ENCODE measurements at regions of chr9 and their contacts with region 1.

Region 1: GRCh38 chr9:114551883-114552685 is 35.5 kb upstream of the ATP6V1G1 start:
- DNase-seq: peak; percentile 98
- ATAC-seq: peak; percentile 96
- H3K4me3 ChIP-seq: peak overlapping the region; percentile 45
- H3K27ac ChIP-seq: peak overlapping the region; percentile 99
- H3K4me1 ChIP-seq: peaks cover 22% of the 10 kb centered on the region
- H3K27me3 ChIP-seq: no peaks in the 10 kb centered on the region
- CTCF ChIP-seq: no peak

Region 2: DNA sequence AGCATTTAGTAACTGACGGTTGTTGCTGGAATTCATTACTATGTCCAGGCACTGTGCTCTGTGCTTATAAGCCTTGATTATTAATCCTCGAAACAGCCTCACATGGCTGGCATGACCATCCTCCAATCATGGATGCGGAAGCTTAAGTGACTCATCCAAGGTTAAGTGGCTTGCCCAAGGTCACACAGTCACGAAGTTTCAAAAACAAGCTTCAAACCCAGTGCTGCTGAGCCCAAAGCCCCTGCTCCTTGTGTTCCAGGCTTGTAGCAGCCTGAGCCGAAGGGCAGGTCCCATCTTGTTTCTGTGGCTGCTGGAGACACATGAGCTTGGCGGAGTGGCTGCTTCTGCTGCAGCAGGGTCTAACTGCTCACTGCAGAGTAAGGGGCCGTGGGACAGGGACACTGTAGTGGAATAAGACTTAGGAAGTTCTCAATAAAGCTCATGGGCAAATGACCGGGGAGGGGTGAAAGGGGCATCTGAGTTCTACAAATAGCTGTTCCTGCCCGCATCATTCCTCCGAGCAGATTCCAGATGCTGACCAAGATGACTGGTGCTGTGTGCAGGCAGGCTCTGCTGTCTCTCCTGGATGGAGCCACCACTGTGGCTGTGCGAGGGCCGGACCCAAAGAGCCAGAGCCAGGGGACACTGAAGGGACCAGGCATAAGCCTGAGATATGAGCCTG is 79.2 kb before region 1 on chr9:
- CTCF ChIA-PET with region 1: no interaction called
- POLR2A ChIA-PET with region 1: no interaction called
- intact Hi-C with region 1: no loop called
- DNase-seq: no peak
- ATAC-seq: no peak
- H3K4me3 ChIP-seq: no peak overlapping the region
- H3K27ac ChIP-seq: no peak overlapping the region
- H3K4me1 ChIP-seq: no peaks in the 10 kb centered on the region
- H3K27me3 ChIP-seq: no peaks in the 10 kb centered on the region
- CTCF ChIP-seq: no peak

Region 3: DNA sequence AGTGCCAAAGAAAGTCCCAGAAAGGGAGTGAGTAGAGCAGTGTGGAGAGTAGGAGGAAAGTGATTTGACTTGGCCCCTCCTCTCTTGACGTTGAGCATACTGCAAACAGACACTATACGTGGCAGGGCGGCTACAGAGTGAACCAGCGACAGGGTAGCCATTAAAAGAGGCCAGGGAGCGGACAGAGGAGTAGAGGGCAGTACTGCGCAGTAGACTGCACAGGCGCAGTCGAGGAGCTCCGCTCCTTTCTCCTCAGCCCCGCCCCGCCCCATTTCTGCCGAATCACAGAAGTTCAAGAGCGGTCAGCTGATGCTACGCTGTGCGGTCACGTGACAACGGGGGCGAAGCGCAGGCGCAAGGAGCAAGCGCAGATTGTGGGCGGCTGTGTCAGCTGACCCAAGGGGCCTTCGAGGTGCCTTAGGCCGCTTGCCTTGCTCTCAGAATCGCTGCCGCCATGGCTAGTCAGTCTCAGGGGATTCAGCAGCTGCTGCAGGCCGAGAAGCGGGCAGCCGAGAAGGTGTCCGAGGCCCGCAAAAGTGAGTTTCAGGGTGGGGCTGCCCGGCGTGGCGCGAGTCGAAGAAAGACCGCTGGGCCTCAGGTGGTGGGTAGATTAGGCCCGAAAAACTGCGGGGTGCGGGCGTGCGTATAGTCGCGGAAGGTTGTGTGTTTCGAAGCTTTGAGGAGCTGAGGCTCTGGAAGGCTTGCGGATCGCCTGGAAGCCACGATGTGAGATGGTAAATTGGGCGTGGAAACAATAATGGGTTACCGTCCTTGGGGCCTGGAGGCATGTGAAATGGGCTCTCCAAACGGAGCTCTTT is 35.5 kb after region 1 on chr9 and contains the start of gene ATP6V1G1:
- CTCF ChIA-PET with region 1: no interaction called
- POLR2A ChIA-PET with region 1: interaction called, 7 read pairs
- intact Hi-C with region 1: loop called (anchors 1 kb)
- DNase-seq: peak; percentile 97
- ATAC-seq: peak; percentile 93
- H3K4me3 ChIP-seq: peak within 1 kb of the TSS; percentile 94
- H3K27ac ChIP-seq: peak within 1 kb of the TSS; percentile 74
- H3K4me1 ChIP-seq: peaks cover 20% of the 10 kb centered on the region
- H3K27me3 ChIP-seq: no peaks in the 10 kb centered on the region
- CTCF ChIP-seq: no peak
- total RNA-seq, gene ATP6V1G1: 126 and 162 TPM in 2 replicates